Activated CD4-positive, alpha-beta T cell treated with anti-CD3 and anti-CD28 coated beads for 36 hours (primary cell): ENCODE measurements at regions of chr12 and their contacts with region 1.

Region 1: GRCh38 chr12:1093166-1093751 is 102.2 kb downstream of the ERC1 start:
- DNase-seq: peak; percentile 46
- ATAC-seq: peak; percentile 71
- H3K4me3 Mint-ChIP-seq: no peak overlapping the region
- H3K27ac Mint-ChIP-seq: no peak overlapping the region
- H3K4me1 Mint-ChIP-seq: peaks cover 27% of the 10 kb centered on the region
- H3K27me3 Mint-ChIP-seq: no peaks in the 10 kb centered on the region

Region 2: DNA sequence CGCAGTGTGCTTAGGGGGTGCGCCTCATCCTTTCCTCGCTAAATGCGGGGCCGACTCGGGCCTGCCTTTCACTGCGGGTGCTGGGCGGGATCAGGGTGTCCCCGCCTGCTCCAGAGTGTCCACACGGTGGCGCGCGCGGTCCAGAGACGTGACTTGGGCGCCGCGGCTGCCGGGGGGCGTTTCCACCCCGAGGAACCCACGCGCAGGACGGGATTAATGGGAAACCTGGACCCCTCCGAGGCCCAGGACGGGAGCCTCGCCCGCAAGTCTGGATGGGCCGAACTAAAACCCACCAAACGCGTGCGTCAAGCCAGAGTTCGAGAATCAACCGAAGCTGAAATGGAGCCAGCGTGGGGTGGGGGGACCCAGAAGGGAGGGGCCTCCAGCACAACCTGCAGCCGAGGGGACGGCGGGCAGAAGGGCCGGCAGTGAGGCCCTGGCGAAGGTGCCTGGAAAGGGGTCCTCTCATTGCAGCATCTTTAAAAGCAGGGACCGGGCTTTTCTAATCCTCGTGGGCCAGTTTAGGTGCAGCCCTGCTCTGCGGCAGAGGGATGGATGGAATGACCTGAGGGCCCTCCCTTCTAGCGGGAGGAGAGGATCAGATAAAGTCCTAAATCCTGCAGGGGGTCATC is 523.3 kb before region 1 on chr12:
- CTCF ChIA-PET with region 1: no interaction called
- POLR2A ChIA-PET with region 1: interaction called, 3 read pairs
- intact Hi-C with region 1: loop called (anchors 5 to 10 kb)
- DNase-seq: peak; percentile 94
- ATAC-seq: peak; percentile 89
- H3K4me3 Mint-ChIP-seq: peak overlapping the region; percentile 74
- H3K27ac Mint-ChIP-seq: peak overlapping the region; percentile 85
- H3K4me1 Mint-ChIP-seq: peaks cover 65% of the 10 kb centered on the region
- H3K27me3 Mint-ChIP-seq: no peaks in the 10 kb centered on the region

Region 3: DNA sequence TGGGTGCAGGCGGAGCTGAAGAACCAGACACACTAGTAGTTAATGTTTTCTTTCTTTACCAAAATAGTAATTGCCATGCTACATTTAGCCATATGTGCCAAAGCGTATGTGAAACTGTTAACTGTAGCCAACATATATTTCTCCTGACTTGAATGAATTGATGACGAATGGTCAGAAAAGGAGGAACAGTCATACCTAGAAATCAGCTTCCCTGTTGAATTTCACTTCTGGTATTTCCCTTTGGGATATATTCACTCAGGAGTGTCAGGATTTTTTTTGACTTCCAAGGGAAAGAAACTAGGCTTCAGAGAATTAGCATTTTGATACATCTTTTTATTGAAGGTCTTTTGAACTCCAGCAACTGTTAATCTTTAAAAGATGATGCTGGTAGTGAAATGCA is 15.3 kb before region 1 on chr12:
- CTCF ChIA-PET with region 1: interaction called, 21 read pairs
- POLR2A ChIA-PET with region 1: no interaction called
- intact Hi-C with region 1: no loop called
- DNase-seq: no peak
- ATAC-seq: no peak
- H3K4me3 Mint-ChIP-seq: no peak overlapping the region
- H3K27ac Mint-ChIP-seq: no peak overlapping the region
- H3K4me1 Mint-ChIP-seq: peaks cover 16% of the 10 kb centered on the region
- H3K27me3 Mint-ChIP-seq: no peaks in the 10 kb centered on the region

Region 4: GRCh38 chr12:1305791-1306500 is 212.7 kb after region 1 on chr12:
- CTCF ChIA-PET with region 1: no interaction called
- POLR2A ChIA-PET with region 1: no interaction called
- intact Hi-C with region 1: no loop called
- DNase-seq: no peak
- ATAC-seq: no peak
- H3K4me3 Mint-ChIP-seq: no peak overlapping the region
- H3K27ac Mint-ChIP-seq: no peak overlapping the region
- H3K4me1 Mint-ChIP-seq: no peaks in the 10 kb centered on the region
- H3K27me3 Mint-ChIP-seq: no peaks in the 10 kb centered on the region